CD14-positive monocyte (primary cell): ENCODE measurements at regions of chr11 and their contacts with region 1.

Region 1: GRCh38 chr11:15816270-15816871 is 540.0 kb downstream of the SOX6 start:
- DNase-seq: peak; percentile 83 to 93 (median 92)
- H3K4me3 ChIP-seq: peak overlapping the region; percentile 12 to 40 (median 33)
- H3K4me3 Mint-ChIP-seq: peak overlapping the region; percentile 35 to 77
- H3K27ac ChIP-seq: peak overlapping the region; percentile 51 to 90
- H3K27ac Mint-ChIP-seq: peak overlapping the region; percentile 92 to 97 (median 95)
- H3K4me1 ChIP-seq: peaks cover 32 to 39% of the 10 kb centered on the region in 2 donors
- H3K4me1 Mint-ChIP-seq: peaks cover 44% of the 10 kb centered on the region
- H3K27me3 ChIP-seq: no peaks in the 10 kb centered on the region
- H3K27me3 Mint-ChIP-seq: peaks cover 0 to 11% (median 5%) of the 10 kb centered on the region in 3 donors
- CTCF ChIP-seq: no peak

Region 2: DNA sequence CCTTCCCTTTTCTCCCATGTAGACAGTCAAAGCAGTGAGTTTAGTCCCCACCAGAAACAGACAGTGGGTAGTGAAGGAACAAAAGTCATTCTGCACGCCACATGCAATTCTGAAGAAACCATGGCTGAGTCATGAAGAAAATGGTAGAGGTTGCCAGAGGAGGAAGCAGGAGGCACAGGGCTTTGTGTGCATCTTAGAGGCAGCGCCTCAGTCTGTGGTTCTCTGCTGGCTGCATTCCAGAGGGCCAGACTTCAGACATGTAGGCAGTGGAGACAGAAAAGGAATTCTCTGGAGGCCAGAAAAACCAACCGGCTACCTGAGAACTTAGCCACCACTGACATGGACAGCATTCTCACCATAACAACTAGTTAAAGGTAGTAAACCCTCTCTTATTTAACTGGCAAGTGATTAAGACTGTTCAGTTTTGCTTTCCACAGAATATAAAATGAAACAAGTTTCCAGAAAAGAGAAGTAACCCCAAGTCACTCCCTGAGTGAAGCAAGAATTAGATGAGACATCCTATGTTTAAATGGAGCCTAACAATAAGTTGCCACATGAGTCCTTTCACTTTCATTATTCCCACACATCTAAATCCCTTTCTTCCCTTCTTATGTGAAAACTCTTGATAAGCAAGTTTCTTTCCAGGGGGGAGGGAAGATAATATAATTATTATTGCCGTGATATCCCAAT is 16.1 kb before region 1 on chr11:
- intact Hi-C with region 1: loop called in 1 of 2 experiments (anchors 1 kb)
- DNase-seq: peak; percentile 88 to 95 (median 92)
- H3K4me3 ChIP-seq: peak overlapping the region; percentile 19 to 58 (median 54)
- H3K4me3 Mint-ChIP-seq: peak overlapping the region; percentile 69 to 86
- H3K27ac ChIP-seq: peak overlapping the region; percentile 92 to 99
- H3K27ac Mint-ChIP-seq: peak overlapping the region; percentile 98 to 99 (median 99)
- H3K4me1 ChIP-seq: peaks cover 26% of the 10 kb centered on the region in 2 donors
- H3K4me1 Mint-ChIP-seq: peaks cover 27% of the 10 kb centered on the region
- H3K27me3 ChIP-seq: no peaks in the 10 kb centered on the region
- H3K27me3 Mint-ChIP-seq: peaks cover 0 to 2% (median 0%) of the 10 kb centered on the region in 3 donors
- CTCF ChIP-seq: no peak